ENCODE measurements at regions of chr1 and their contacts with region 1.

Region 1: GRCh38 chr1:20540281-20540680 is 12.1 kb upstream of the FAM43B start:
- DNase-seq: no peak

Region 2: DNA sequence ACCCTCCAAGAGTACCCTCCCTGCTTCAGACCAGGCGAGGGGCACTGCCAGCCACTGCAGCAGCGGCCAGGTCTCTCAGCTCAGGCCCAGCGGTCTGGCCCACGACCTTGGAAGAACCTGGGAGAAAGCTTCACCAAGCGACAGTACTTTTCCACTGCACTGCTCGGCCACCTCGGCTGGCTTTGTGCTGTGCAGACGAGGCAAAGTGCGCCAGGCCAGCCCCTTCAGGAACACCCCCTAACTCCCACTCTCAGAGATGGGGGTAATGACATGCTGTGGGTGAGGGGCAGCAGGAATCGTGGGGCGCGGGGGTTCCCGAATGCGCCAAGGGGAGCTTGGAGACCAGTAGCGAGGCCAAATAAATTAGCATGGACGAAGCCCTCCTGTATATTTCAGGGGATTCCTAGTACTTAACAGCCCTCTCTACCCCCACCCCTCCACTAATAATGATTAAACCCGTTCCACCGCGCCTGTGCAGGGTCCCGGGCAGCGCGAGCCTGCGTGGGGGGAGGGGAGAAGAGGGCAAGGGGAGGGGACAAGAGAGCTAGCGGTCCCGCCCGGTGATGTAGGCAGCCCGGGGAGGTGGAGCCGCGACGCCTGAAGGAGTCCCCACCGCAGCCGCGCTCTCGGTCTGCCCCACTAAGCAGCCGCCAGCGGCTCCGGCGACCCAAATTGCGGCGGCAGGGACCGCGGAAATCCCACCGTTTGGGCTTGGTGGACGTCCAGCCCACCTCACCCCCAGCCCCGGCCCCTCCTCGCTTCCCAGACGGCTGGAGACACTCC is 11.9 kb after region 1 on chr1 and contains the start of gene FAM43B:
- CTCF ChIA-PET with region 1: no interaction called
- POLR2A ChIA-PET with region 1: interaction called, 15 read pairs
- DNase-seq: peak; percentile 73